IMR-90 (cell line): ENCODE measurements at regions of chr22 and their contacts with region 1.

Region 1: GRCh38 chr22:38317122-38317994 is at the start of gene CSNK1E:
- DNase-seq: peak; percentile 33
- ATAC-seq: peak; percentile 25
- H3K4me3 ChIP-seq: peak within 1 kb of the TSS; percentile 92
- H3K27ac ChIP-seq: peak within 1 kb of the TSS; percentile 98
- H3K4me1 ChIP-seq: peaks cover 29% of the 10 kb centered on the region
- H3K27me3 ChIP-seq: no peaks in the 10 kb centered on the region
- CTCF ChIP-seq: no peak
- POLR2A ChIP-seq: peak; percentile 53; the same call in 1 of the 2 replicates
- RAD21 ChIP-seq: no peak
- total RNA-seq, gene CSNK1E: 114 and 116 TPM in 2 replicates

Region 2: DNA sequence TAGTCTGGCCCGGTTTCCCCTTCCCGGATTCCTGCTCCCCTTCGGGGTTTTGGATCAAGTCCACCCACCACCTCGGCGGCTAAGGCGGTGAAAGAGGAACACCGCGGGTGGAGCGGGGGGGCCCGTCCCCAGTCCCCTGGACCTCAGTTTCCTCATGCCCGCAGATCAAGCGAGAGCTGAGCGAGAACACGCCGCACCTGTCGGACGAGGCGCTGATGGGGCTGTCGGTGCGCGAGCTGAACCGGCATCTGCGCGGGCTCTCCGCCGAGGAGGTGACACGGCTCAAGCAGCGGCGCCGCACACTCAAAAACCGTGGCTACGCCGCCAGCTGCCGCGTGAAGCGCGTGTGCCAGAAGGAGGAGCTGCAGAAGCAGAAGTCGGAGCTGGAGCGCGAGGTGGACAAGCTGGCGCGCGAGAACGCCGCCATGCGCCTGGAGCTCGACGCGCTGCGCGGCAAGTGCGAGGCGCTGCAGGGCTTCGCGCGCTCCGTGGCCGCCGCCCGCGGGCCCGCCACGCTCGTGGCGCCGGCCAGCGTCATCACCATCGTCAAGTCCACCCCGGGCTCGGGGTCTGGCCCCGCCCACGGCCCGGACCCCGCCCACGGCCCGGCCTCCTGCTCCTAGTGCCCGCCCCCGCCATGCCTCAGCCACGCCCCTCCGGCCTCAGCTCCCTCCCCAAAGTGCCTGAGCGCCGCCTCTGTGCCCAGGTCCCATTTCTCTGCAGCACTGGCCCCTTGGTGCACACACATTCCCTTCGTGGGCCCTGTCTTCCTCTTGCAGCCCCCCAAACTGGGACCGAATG is 102.9 kb before region 1 on chr22:
- CTCF ChIA-PET with region 1: no interaction called
- POLR2A ChIA-PET with region 1: no interaction called
- dilution Hi-C with region 1: no loop called
- in situ Hi-C with region 1: no loop called
- intact Hi-C with region 1: no loop called
- DNase-seq: peak; percentile 49
- ATAC-seq: peak; percentile 59
- H3K4me3 ChIP-seq: no peak overlapping the region
- H3K27ac ChIP-seq: no peak overlapping the region
- H3K4me1 ChIP-seq: peaks cover 26% of the 10 kb centered on the region
- H3K27me3 ChIP-seq: no peaks in the 10 kb centered on the region
- CTCF ChIP-seq: no peak
- POLR2A ChIP-seq: 0 out of 2 replicates have a peak, but pooled peaks have one; percentile 5
- RAD21 ChIP-seq: no peak

Region 3: DNA sequence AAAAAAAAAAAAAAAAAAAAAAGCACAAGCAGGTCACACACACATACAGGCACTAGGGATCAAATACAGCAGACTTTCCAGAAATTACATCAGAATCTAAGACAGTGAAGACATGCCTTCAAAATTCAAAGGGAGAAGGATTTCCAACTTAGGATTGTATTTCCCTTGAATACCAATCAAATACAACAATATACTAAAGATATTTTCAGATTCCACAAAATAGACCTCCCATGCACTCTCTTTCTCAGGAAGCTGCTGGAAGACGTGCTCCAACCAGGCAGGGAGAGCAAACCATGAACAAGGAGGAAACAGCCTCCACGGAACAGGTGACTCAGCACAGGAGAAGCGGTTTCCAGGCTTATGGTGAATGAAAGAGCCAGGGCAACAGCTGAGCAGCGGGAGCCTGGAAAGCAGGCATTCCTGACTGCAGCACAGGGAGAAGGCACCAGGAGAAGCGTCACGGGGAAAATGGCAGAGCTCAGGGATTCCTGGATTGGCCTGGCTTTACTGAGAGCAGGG is 76.6 kb before region 1 on chr22:
- CTCF ChIA-PET with region 1: no interaction called
- POLR2A ChIA-PET with region 1: no interaction called
- dilution Hi-C with region 1: no loop called
- in situ Hi-C with region 1: no loop called
- intact Hi-C with region 1: loop called (anchors 2 kb)
- DNase-seq: peak; percentile 91
- ATAC-seq: peak; percentile 19
- H3K4me3 ChIP-seq: no peak overlapping the region
- H3K27ac ChIP-seq: peak overlapping the region; percentile 64
- H3K4me1 ChIP-seq: peaks cover 38% of the 10 kb centered on the region
- H3K27me3 ChIP-seq: no peaks in the 10 kb centered on the region
- CTCF ChIP-seq: no peak
- POLR2A ChIP-seq: no peak; the same call in 1 of the 2 replicates
- RAD21 ChIP-seq: peak; percentile 28; the same call in 1 of the 2 replicates

Region 4: GRCh38 chr22:38305471-38306448 is 11.6 kb before region 1 on chr22:
- CTCF ChIA-PET with region 1: interaction called, 3 read pairs
- POLR2A ChIA-PET with region 1: interaction called, 30 read pairs
- dilution Hi-C with region 1: no loop called
- in situ Hi-C with region 1: no loop called
- intact Hi-C with region 1: no loop called
- DNase-seq: peak; percentile 54
- ATAC-seq: peak; percentile 19; the same call in 1 of the 2 replicates
- H3K4me3 ChIP-seq: no peak overlapping the region
- H3K27ac ChIP-seq: peak overlapping the region; percentile 51
- H3K4me1 ChIP-seq: peaks cover 33% of the 10 kb centered on the region
- H3K27me3 ChIP-seq: no peaks in the 10 kb centered on the region
- CTCF ChIP-seq: no peak
- POLR2A ChIP-seq: no peak
- RAD21 ChIP-seq: no peak

Region 5: DNA sequence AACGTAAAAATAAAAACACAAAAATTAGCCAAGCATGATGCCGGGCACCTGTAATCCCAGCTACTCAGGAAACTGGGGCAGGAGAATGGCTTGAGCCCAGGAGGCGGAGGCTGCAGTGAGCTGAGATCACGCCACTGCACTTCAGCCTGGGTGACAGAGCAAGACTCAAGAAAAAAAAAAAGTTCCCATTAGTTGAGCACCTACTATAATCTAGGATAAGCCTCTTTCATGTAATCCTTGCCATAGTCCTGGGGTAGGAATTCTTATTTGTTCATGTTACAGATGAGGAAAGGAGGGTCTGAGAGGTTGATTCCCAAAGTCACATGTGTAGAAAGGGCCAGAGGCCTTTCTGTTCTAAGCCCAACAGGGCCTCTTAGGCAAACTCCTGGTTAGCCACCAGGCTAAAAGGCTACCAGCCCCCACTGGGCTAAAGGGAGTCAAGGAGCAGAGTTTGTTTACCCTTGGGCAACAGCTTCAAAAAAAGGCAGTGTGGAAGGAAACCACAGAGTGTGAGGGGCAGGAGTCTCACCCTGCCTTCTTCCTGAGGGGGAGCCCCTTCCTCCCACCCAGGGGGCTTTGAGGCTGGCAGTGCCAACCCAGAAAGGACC is 21.5 kb after region 1 on chr22:
- CTCF ChIA-PET with region 1: no interaction called
- POLR2A ChIA-PET with region 1: no interaction called
- dilution Hi-C with region 1: no loop called
- in situ Hi-C with region 1: no loop called
- intact Hi-C with region 1: no loop called
- DNase-seq: no peak
- ATAC-seq: peak; percentile 47
- H3K4me3 ChIP-seq: no peak overlapping the region
- H3K27ac ChIP-seq: no peak overlapping the region
- H3K4me1 ChIP-seq: peaks cover 5% of the 10 kb centered on the region
- H3K27me3 ChIP-seq: no peaks in the 10 kb centered on the region
- CTCF ChIP-seq: no peak
- POLR2A ChIP-seq: no peak
- RAD21 ChIP-seq: no peak

Region 6: DNA sequence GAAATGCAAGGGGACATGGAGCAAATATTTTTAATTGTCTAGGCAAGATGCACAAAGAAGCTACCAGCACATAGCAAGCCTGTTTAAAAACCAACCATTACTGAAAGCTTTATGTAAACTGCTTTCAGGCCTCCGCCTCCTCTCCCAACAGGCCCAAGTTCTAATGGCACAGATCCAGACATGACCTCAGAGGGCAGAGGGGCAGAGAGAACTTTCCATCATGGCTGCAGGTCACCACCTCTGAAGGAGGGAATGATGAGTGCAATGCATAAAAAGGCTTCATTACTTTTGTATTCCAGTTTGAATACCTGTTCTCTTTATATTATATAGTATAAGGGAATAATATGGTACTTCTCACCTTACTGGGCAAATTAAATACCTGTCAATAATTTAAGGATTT is 173.6 kb after region 1 on chr22:
- CTCF ChIA-PET with region 1: no interaction called
- POLR2A ChIA-PET with region 1: interaction called, 12 read pairs
- dilution Hi-C with region 1: no loop called
- in situ Hi-C with region 1: no loop called
- intact Hi-C with region 1: no loop called
- DNase-seq: peak; percentile 79
- ATAC-seq: peak; percentile 65
- H3K4me3 ChIP-seq: no peak overlapping the region
- H3K27ac ChIP-seq: no peak overlapping the region; the same call in 1 of the 2 replicates
- H3K4me1 ChIP-seq: peaks cover 26% of the 10 kb centered on the region
- H3K27me3 ChIP-seq: no peaks in the 10 kb centered on the region
- CTCF ChIP-seq: no peak
- POLR2A ChIP-seq: no peak
- RAD21 ChIP-seq: no peak